HCT116 (cell line): ENCODE measurements at regions of chr6 and their contacts with region 1.

Region 1: DNA sequence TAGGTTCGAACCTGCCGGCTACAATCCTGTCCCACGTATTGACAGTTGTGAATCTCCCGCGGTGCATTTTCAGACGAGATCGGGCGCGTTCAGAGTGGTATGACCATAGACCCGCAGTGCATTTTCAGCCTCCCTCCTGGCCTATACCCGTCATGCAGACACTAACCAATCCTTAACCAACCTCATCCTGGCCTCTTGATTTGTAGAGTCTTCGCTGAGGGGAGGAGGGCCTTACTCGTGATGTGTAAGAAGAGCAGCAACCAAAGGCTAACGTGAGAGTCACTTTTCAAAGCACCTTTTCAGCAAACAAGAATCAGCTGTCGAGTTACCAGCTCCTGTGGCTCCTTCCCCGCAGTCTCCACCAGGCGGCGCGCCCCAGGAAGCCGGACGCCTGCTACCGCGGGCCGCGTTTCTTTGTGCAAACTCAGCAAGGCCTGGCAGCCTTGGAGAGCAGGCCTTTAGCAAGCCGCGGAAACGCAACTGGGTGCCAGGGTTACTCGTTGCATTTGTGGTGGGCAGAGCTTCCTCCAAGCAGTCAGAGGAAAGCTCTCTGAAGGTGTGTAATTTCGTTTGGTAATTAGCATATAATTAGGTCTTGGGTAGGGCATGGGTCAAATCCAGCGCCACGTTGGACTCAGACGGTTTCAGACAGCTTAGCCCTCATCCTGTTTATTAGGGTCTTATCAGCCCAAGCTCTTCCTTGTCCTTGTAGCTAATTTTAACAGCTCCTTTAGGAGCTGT is 139.8 kb downstream of the OR2B2 start:
- DNase-seq: peak; percentile 78
- ATAC-seq: peak; percentile 92
- H3K4me3 ChIP-seq: peak overlapping the region; percentile 3 to 38; a peak in 3 of 4 replicates
- H3K27ac ChIP-seq: peak overlapping the region; percentile 4; the same call in 1 of the 2 replicates
- H3K4me1 ChIP-seq: peaks cover 4 to 16% of the 10 kb centered on the region in 2 experiments; a peak in 3 of 4 replicates
- H3K27me3 ChIP-seq: no peaks in the 10 kb centered on the region
- CTCF ChIP-seq: peak; percentile 85 to 93 (median 91)
- POLR2A ChIP-seq: no peak
- RAD21 ChIP-seq: peak; percentile 72

Region 2: GRCh38 chr6:27761391-27761790 is 11.0 kb before region 1 on chr6:
- CTCF ChIA-PET with region 1: interaction called, 25 read pairs
- POLR2A ChIA-PET with region 1: interaction called, 4 read pairs
- RAD21 ChIA-PET with region 1: no interaction called
- intact Hi-C with region 1: no loop called
- DNase-seq: no peak
- ATAC-seq: no peak
- H3K4me3 ChIP-seq: no peak overlapping the region
- H3K27ac ChIP-seq: no peak overlapping the region
- H3K4me1 ChIP-seq: peaks cover 6 to 17% of the 10 kb centered on the region in 2 experiments; a peak in 3 of 4 replicates
- H3K27me3 ChIP-seq: no peaks in the 10 kb centered on the region
- CTCF ChIP-seq: no peak
- POLR2A ChIP-seq: no peak
- RAD21 ChIP-seq: no peak

Region 3: GRCh38 chr6:27795697-27796494 is 23.5 kb after region 1 on chr6:
- CTCF ChIA-PET with region 1: interaction called, 25 read pairs
- POLR2A ChIA-PET with region 1: interaction called, 3 read pairs
- RAD21 ChIA-PET with region 1: no interaction called
- intact Hi-C with region 1: no loop called
- DNase-seq: peak; percentile 90
- ATAC-seq: peak; percentile 46
- H3K4me3 ChIP-seq: no peak overlapping the region
- H3K27ac ChIP-seq: peak overlapping the region; percentile 26; the same call in 1 of the 2 replicates
- H3K4me1 ChIP-seq: peaks cover 13 to 32% of the 10 kb centered on the region in 2 experiments
- H3K27me3 ChIP-seq: no peaks in the 10 kb centered on the region
- CTCF ChIP-seq: peak; percentile 75 to 80 (median 76); a peak in 5 of 6 replicates
- POLR2A ChIP-seq: no peak
- RAD21 ChIP-seq: peak; percentile 82